Endothelial cell of umbilical vein (primary cell): ENCODE measurements at regions of chr2 and their contacts with region 1.

Region 1: GRCh38 chr2:187138265-187138664 is 289.3 kb upstream of the ZSWIM2 start:
- DNase-seq: peak; percentile 81
- H3K4me3 ChIP-seq: no peak overlapping the region
- H3K27ac ChIP-seq: peak overlapping the region; percentile 1
- H3K4me1 ChIP-seq: peaks cover 30% of the 10 kb centered on the region
- H3K27me3 ChIP-seq: no peaks in the 10 kb centered on the region
- CTCF ChIP-seq: peak; percentile 70 to 80
- POLR2A ChIP-seq: no peak

Region 2: DNA sequence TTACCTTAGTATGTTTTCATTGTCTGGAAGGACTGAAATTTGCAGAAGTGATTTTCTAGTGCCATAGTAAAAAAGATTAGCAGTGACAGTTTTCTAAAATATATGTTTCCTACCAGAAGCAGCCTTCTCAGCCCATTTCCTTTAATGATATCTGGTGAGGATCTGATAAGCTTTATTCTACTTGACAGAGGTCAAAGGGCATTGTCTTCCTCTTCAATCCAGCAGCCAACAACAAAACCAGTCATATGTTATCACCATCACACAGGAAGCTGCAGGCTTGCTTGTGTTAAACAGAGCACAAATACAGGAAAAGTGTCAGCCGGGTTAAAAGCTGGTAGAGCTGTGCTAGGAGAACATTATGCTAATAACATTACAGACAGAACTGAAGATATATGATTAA is 253.7 kb before region 1 on chr2:
- CTCF ChIA-PET with region 1: interaction called, 4 read pairs
- POLR2A ChIA-PET with region 1: no interaction called
- dilution Hi-C with region 1: no loop called
- intact Hi-C with region 1: loop called (anchors 1 kb)
- DNase-seq: peak; percentile 98
- H3K4me3 ChIP-seq: no peak overlapping the region
- H3K27ac ChIP-seq: peak overlapping the region; percentile 71
- H3K4me1 ChIP-seq: peaks cover 55% of the 10 kb centered on the region
- H3K27me3 ChIP-seq: no peaks in the 10 kb centered on the region
- CTCF ChIP-seq: no peak
- POLR2A ChIP-seq: peak; percentile 86

Region 3: DNA sequence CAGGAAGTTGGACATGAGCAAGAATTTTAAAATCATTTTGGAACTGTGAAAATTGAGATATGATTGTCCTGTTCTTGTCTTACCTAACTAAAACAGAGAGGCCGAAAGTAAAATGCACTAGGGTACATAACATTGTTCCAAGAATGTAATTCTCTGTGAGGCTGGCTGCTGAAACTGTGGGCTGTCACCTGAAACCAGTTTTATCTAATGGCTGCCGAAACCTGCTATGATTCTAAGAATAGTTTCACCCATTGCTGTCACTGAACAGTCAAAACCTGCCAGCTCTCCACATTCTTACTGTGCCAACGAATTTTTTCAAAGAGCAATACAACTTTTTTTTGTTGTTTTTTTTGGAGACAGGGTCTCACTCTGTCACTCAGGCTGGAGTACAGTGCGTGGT is 170.0 kb before region 1 on chr2:
- CTCF ChIA-PET with region 1: no interaction called
- POLR2A ChIA-PET with region 1: no interaction called
- dilution Hi-C with region 1: no loop called
- intact Hi-C with region 1: no loop called
- DNase-seq: no peak
- H3K4me3 ChIP-seq: no peak overlapping the region
- H3K27ac ChIP-seq: no peak overlapping the region
- H3K4me1 ChIP-seq: no peaks in the 10 kb centered on the region
- H3K27me3 ChIP-seq: no peaks in the 10 kb centered on the region
- CTCF ChIP-seq: no peak
- POLR2A ChIP-seq: no peak

Region 4: GRCh38 chr2:186991766-186992417 is 146.4 kb before region 1 on chr2:
- CTCF ChIA-PET with region 1: interaction called, 9 read pairs
- POLR2A ChIA-PET with region 1: no interaction called
- dilution Hi-C with region 1: no loop called
- intact Hi-C with region 1: loop called (anchors 2 kb)
- DNase-seq: peak; percentile 74
- H3K4me3 ChIP-seq: no peak overlapping the region
- H3K27ac ChIP-seq: no peak overlapping the region
- H3K4me1 ChIP-seq: peaks cover 25% of the 10 kb centered on the region
- H3K27me3 ChIP-seq: no peaks in the 10 kb centered on the region
- CTCF ChIP-seq: peak; percentile 0 to 9
- POLR2A ChIP-seq: no peak

Region 5: GRCh38 chr2:187299122-187299906 is 161.0 kb after region 1 on chr2:
- CTCF ChIA-PET with region 1: interaction called, 8 read pairs
- POLR2A ChIA-PET with region 1: interaction called, 9 read pairs
- dilution Hi-C with region 1: no loop called
- intact Hi-C with region 1: loop called (anchors 1 kb)
- DNase-seq: peak; percentile 75
- H3K4me3 ChIP-seq: no peak overlapping the region
- H3K27ac ChIP-seq: peak overlapping the region; percentile 70
- H3K4me1 ChIP-seq: peaks cover 40% of the 10 kb centered on the region
- H3K27me3 ChIP-seq: no peaks in the 10 kb centered on the region
- CTCF ChIP-seq: peak; percentile 40 to 47
- POLR2A ChIP-seq: no peak

Region 6: GRCh38 chr2:187360286-187360685 is 222.0 kb after region 1 on chr2:
- CTCF ChIA-PET with region 1: no interaction called
- POLR2A ChIA-PET with region 1: no interaction called
- dilution Hi-C with region 1: no loop called
- intact Hi-C with region 1: loop called (anchors 5 kb)
- DNase-seq: peak; percentile 82
- H3K4me3 ChIP-seq: no peak overlapping the region
- H3K27ac ChIP-seq: peak overlapping the region; percentile 79
- H3K4me1 ChIP-seq: peaks cover 37% of the 10 kb centered on the region
- H3K27me3 ChIP-seq: no peaks in the 10 kb centered on the region
- CTCF ChIP-seq: no peak
- POLR2A ChIP-seq: no peak

Region 7: DNA sequence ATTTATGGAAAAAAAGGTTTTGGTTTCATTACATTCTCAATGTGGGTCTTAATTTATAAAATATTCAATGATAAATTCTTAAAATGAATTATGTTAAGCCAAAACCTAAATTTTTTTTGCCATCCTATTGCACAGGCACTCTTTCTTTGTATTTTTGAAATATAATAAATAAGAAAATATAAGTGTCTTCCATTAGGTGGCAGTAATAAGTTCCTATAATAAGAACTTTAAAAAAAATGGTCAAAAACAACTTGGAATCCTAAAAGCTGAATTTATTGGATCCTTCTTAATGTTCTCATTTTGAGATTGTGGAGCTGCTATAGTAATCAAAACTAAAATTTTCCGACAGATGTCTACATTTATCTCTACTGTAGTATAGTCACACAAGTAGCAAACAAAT is 304.1 kb after region 1 on chr2:
- CTCF ChIA-PET with region 1: interaction called, 24 read pairs
- POLR2A ChIA-PET with region 1: interaction called, 11 read pairs
- dilution Hi-C with region 1: no loop called
- intact Hi-C with region 1: no loop called
- DNase-seq: no peak
- H3K4me3 ChIP-seq: peak overlapping the region in 2 of 3 experiments; percentile 60 to 100
- H3K27ac ChIP-seq: peak overlapping the region; percentile 88
- H3K4me1 ChIP-seq: peaks cover 68% of the 10 kb centered on the region
- H3K27me3 ChIP-seq: no peaks in the 10 kb centered on the region
- CTCF ChIP-seq: no peak
- POLR2A ChIP-seq: no peak

Region 8: GRCh38 chr2:188219541-188219940 is 1081.3 kb after region 1 on chr2:
- CTCF ChIA-PET with region 1: no interaction called
- POLR2A ChIA-PET with region 1: no interaction called
- dilution Hi-C with region 1: no loop called
- intact Hi-C with region 1: no loop called
- DNase-seq: no peak
- H3K4me3 ChIP-seq: no peak overlapping the region
- H3K27ac ChIP-seq: no peak overlapping the region
- H3K4me1 ChIP-seq: no peaks in the 10 kb centered on the region
- H3K27me3 ChIP-seq: no peaks in the 10 kb centered on the region
- CTCF ChIP-seq: no peak
- POLR2A ChIP-seq: no peak